CD8-positive, alpha-beta memory T cell (primary cell): ENCODE measurements at regions of chr4 and their contacts with region 1.

Region 1: DNA sequence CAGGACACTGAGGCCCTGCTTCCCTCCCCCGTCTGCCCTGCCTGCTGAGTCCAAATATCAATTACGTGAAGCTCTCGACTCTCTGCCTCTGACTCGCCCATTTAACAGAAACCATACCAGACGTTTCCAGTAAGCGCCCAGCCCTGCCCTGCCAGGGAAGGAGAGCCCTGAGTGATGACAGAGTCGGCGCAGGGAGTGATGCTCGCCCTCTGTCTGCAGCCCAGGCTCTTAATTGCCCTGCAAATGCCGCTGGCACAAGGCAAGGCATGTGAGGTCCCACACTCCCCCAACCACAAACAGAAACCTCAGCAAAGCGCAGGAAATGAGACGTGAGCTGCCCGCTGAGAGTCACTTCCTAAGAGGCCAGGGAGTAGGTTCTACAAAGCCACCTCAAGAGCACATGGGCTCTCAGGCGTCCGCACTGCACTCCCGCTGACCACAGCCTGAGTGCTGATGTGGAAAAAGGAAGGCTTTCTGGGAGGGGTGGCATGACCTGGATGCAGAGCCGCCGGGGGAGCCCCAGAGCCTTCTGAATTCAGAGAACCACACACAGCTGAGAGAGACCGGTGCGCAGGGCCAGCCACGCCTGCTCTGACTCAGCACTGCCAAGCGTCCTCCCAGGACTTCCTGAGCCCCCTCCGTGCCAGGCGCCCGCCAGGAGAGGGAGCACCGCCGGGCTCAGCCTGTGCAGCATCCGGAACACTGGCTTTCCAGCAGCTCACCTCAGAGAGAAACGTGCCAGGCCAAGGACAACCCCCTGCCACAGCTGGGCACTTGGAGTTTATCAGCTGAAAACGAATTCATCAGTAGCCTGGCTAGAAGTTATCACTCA is 5.3 kb downstream of the ZFYVE28 start:
- DNase-seq: peak; percentile 85 to 97 (median 92)
- H3K4me3 ChIP-seq: peak overlapping the region; percentile 48
- H3K4me3 Mint-ChIP-seq: peak overlapping the region; percentile 74 to 85 (median 78)
- H3K27ac ChIP-seq: peak overlapping the region; percentile 95
- H3K27ac Mint-ChIP-seq: peak overlapping the region; percentile 93 to 100 (median 98)
- H3K4me1 ChIP-seq: peaks cover 72% of the 10 kb centered on the region
- H3K4me1 Mint-ChIP-seq: peaks cover 60 to 88% (median 71%) of the 10 kb centered on the region in 3 donors
- H3K27me3 ChIP-seq: no peaks in the 10 kb centered on the region
- H3K27me3 Mint-ChIP-seq: peaks cover 0 to 6% of the 10 kb centered on the region in 2 donors

Region 2: DNA sequence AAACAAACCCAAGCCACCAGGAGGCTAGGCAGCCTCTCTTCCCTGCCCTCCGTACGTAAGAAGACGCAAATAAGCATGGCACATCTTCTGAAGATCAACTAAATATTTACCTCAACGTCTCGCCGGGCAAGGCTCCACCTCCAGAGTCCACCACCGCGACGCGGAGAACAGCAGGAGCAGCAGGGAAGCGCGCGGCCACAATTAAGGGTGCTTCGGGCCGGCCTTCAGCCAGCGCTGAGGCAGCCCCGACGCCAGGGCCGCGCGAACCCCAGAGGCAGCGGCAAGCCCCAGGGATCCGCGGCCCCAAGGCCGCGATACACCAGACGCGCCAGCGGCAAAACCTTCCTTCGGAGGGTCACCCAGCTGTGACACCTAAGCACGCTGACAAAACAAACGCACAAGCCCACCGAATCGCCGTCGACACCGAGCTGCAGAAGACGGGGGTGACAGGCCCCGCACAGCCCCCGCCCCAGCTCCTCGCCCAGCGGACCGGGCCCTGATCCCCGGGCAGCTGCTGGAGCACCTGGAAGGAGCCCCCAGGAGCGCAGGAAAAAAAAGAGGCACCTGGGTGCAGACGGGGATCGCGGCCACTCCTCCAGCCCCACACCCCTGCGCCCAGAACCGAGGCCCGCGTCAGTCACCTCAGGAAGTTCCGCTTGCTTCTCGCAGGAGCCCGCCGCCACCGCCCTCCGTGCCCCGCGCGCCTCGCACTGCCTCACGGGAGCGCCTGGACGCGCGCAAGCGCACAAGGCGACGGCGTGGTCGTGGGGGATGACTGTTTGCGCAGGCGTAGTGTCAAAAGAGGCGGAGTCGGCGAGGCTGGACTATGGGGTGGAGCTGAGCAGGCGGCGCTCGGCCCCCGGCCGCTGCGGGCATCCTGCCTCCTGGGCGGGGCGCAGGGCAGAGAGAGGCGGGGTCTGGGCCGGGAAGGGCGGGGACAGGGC is 171.4 kb before region 1 on chr4 and contains the starts of genes HAUS3 and POLN:
- CTCF ChIA-PET with region 1: interaction called, 7 read pairs
- POLR2A ChIA-PET with region 1: interaction called, 14 read pairs
- DNase-seq: peak; percentile 99 to 100 (median 99)
- H3K4me3 ChIP-seq: peak within 1 kb of the TSS; percentile 81
- H3K4me3 Mint-ChIP-seq: peak within 1 kb of the TSS; percentile 88 to 95 (median 93)
- H3K27ac ChIP-seq: peak within 1 kb of the TSS; percentile 89
- H3K27ac Mint-ChIP-seq: peak within 1 kb of the TSS; percentile 90 to 98 (median 93)
- H3K4me1 ChIP-seq: peaks cover 39% of the 10 kb centered on the region
- H3K4me1 Mint-ChIP-seq: peaks cover 56 to 73% (median 66%) of the 10 kb centered on the region in 3 donors
- H3K27me3 ChIP-seq: no peaks in the 10 kb centered on the region
- H3K27me3 Mint-ChIP-seq: no peaks in the 10 kb centered on the region
- total RNA-seq, gene HAUS3: 23.8 to 23.9 TPM
- total RNA-seq, gene POLN: 1.5 to 1.6 TPM

Region 3: DNA sequence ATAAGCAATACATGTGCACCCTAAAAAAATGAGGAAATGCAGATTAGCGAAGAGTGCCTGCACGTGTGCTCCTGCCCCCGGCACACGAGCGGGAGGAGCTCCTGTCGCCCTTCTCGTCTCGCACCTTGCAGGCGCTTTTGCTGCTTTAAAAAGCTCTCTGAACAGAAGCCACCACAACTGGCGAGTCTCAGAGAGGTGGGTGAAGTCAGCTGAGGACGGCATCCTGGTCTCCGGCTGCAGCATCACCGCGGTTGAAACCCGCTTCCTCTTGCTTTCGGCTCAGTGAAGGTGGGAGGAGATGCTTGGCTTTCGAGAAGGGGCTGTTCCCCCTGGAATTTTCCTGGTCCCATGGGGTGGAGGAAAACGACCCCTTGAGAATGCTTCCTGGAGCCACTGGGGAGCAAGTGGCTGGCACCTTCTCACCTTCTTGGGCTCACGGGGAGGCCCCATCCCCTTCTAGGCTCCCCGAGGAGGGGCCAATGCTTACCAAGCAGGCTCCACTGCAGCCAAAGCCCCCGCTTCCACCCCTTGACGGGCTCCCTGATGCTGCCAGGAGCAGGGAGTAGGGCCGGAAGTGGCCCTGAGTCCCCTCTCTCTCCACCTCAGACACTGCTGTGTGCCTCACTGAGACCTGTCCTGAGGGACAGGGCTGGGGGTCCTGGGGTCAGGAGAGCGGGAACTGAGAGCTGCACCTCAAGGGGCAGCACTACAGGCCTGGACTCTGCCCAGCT is 122.0 kb before region 1 on chr4:
- CTCF ChIA-PET with region 1: interaction called, 9 read pairs
- POLR2A ChIA-PET with region 1: interaction called, 21 read pairs
- DNase-seq: peak; percentile 80 to 94 (median 89)
- H3K4me3 ChIP-seq: peak overlapping the region; percentile 45
- H3K4me3 Mint-ChIP-seq: peak overlapping the region; percentile 66 to 86 (median 76)
- H3K27ac ChIP-seq: peak overlapping the region; percentile 65
- H3K27ac Mint-ChIP-seq: peak overlapping the region; percentile 93 to 98 (median 96)
- H3K4me1 ChIP-seq: peaks cover 56% of the 10 kb centered on the region
- H3K4me1 Mint-ChIP-seq: peaks cover 33 to 66% (median 41%) of the 10 kb centered on the region in 3 donors
- H3K27me3 ChIP-seq: no peaks in the 10 kb centered on the region
- H3K27me3 Mint-ChIP-seq: peaks cover 0 to 2% of the 10 kb centered on the region in 2 donors

Region 4: GRCh38 chr4:2393353-2394270 is 19.5 kb before region 1 on chr4:
- CTCF ChIA-PET with region 1: interaction called, 10 read pairs
- POLR2A ChIA-PET with region 1: no interaction called
- DNase-seq: peak in 2 of 5 donors; percentile 14 to 48
- H3K4me3 ChIP-seq: peak overlapping the region; percentile 45
- H3K4me3 Mint-ChIP-seq: peak overlapping the region in 6 of 7 donors; percentile 35 to 79 (median 58)
- H3K27ac ChIP-seq: peak overlapping the region; percentile 72
- H3K27ac Mint-ChIP-seq: peak overlapping the region in 5 of 8 donors; percentile 59 to 86 (median 73)
- H3K4me1 ChIP-seq: peaks cover 28% of the 10 kb centered on the region
- H3K4me1 Mint-ChIP-seq: peaks cover 37 to 68% (median 43%) of the 10 kb centered on the region in 3 donors
- H3K27me3 ChIP-seq: no peaks in the 10 kb centered on the region
- H3K27me3 Mint-ChIP-seq: peaks cover 0 to 3% of the 10 kb centered on the region in 2 donors